ENCODE measurements at regions of chr3 and their contacts with region 1.

Region 1: GRCh38 chr3:9302425-9303181 is 53.2 kb upstream of the SRGAP3 start:
- DNase-seq: peak; percentile 79 to 93
- H3K4me3 ChIP-seq: peak overlapping the region in 3 of 4 experiments; percentile 23 to 59 (median 38); a peak in 6 of 8 replicates
- H3K27ac ChIP-seq: no peak overlapping the region
- H3K4me1 ChIP-seq: peaks cover 0 to 5% (median 3%) of the 10 kb centered on the region in 4 experiments; a peak in 5 of 7 replicates
- H3K27me3 ChIP-seq: peaks cover 0 to 2% (median under 1%) of the 10 kb centered on the region in 4 experiments; a peak in 1 of 7 replicates
- CTCF ChIP-seq: peak; percentile 70 to 98 (median 80)
- EP300 ChIP-seq: peak in 1 of 2 experiments; percentile 51; a peak in 1 of 3 replicates
- POLR2A ChIP-seq: no peak
- RAD21 ChIP-seq: peak; percentile 97 to 99

Region 2: DNA sequence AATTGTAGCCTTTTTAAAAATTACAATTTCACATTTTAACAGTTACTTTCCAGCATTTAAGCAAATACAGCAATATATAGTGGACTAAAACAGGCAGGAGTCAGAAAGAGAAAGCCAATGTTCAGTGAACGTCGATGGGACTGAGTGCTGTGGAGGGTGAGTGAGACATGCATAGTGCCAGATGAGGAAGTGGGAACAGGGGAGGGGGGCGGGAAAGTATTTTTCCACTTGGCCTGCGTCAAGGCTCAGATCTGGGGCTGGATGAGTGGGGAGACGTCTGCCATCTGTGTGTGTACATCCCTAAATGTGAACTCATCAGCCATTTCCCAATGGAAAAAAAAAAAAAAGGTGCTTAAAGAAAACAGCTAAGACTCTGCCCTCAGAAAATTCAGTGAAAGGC is 320.1 kb before region 1 on chr3:
- CTCF ChIA-PET with region 1: interaction called, 200 read pairs
- POLR2A ChIA-PET with region 1: interaction called, 4 read pairs
- DNase-seq: no peak
- H3K4me3 ChIP-seq: no peak overlapping the region
- H3K27ac ChIP-seq: no peak overlapping the region
- H3K4me1 ChIP-seq: no peaks in the 10 kb centered on the region; a peak in 1 of 7 replicates
- H3K27me3 ChIP-seq: no peaks in the 10 kb centered on the region
- CTCF ChIP-seq: no peak
- EP300 ChIP-seq: no peak
- POLR2A ChIP-seq: no peak
- RAD21 ChIP-seq: no peak

Region 3: GRCh38 chr3:9098569-9099367 is 203.8 kb before region 1 on chr3:
- CTCF ChIA-PET with region 1: interaction called, 19 read pairs
- POLR2A ChIA-PET with region 1: interaction called, 3 read pairs
- DNase-seq: no peak
- H3K4me3 ChIP-seq: no peak overlapping the region
- H3K27ac ChIP-seq: no peak overlapping the region
- H3K4me1 ChIP-seq: peaks cover 4 to 22% (median 18%) of the 10 kb centered on the region in 4 experiments; a peak in 5 of 7 replicates
- H3K27me3 ChIP-seq: no peaks in the 10 kb centered on the region
- CTCF ChIP-seq: no peak
- EP300 ChIP-seq: no peak
- POLR2A ChIP-seq: no peak
- RAD21 ChIP-seq: no peak

Region 4: DNA sequence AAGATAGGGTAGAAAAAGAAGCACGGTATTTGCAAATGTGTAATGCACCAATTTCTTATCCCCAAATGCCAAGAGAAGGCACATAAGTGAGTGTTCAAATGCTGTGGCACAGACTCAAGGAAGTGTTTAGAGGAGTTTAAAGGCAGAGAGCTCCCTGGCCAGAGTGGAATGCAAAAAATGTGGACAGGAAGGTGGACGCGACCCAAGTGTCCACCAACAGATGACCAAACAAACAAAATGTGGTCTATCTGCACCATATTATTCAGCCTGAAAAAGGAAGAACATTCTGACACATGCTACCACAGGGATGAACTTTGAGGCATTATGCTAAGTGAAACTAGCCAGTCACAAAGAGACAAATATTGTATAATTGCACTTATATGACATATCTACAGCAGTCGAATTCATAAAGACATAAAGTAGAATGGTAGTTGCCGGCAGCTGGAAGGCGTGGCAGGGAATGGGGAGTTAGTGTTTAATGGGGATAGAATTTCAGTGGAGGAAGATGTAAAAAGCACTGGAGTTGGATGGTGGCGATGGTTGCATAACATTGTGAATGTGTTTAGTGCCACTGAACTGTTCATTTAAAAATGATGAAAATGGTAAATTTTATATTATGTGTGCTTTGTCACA is 179.8 kb before region 1 on chr3:
- CTCF ChIA-PET with region 1: interaction called, 19 read pairs
- POLR2A ChIA-PET with region 1: no interaction called
- DNase-seq: no peak
- H3K4me3 ChIP-seq: no peak overlapping the region
- H3K27ac ChIP-seq: no peak overlapping the region
- H3K4me1 ChIP-seq: peaks cover 5 to 14% (median 8%) of the 10 kb centered on the region in 4 experiments; a peak in 5 of 7 replicates
- H3K27me3 ChIP-seq: no peaks in the 10 kb centered on the region
- CTCF ChIP-seq: no peak
- EP300 ChIP-seq: no peak
- POLR2A ChIP-seq: no peak
- RAD21 ChIP-seq: no peak

Region 5: DNA sequence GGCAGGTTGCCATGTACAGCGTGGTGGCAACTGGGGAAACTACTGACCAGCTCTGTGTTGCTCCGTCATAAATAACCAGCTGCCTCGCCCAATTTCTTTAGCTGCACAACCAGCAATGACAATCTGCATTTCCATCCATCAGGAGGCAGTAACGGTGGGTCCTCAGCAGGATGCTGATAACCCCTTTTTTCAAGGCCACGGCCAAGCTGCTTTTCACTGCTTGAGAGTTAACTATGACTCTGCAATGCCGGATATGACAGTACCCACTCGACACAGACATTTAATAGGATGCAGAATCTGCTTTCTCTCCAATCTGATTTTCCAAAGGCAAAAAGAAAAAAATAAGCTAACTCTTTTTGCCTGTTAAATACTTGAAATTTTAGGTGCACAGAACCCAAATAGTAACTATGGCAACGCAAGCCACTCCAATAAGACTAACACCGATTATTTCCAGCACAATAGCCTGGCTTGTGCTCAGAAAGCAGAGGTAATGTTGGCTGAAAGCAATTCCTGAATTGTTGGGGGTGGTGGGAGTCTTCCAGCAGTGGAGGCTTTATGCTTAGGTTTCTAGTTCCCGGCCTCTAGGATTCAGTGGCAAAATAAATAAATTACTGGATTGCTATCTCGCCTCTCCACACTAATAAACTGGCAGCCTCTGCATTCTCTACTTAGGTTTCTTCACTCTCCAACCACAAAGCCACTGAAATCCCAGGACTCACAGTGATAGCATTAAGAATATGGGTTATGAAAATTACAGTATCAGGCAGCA is 22.0 kb before region 1 on chr3:
- CTCF ChIA-PET with region 1: interaction called, 13 read pairs
- POLR2A ChIA-PET with region 1: interaction called, 5 read pairs
- DNase-seq: no peak
- H3K4me3 ChIP-seq: no peak overlapping the region
- H3K27ac ChIP-seq: no peak overlapping the region
- H3K4me1 ChIP-seq: peaks cover 5 to 8% (median 6%) of the 10 kb centered on the region in 4 experiments
- H3K27me3 ChIP-seq: no peaks in the 10 kb centered on the region
- CTCF ChIP-seq: peak in 1 of 3 experiments; percentile 12; a peak in 1 of 4 replicates
- EP300 ChIP-seq: no peak
- POLR2A ChIP-seq: no peak
- RAD21 ChIP-seq: peak in 1 of 2 experiments; percentile 16; a peak in 1 of 4 replicates

Region 6: GRCh38 chr3:9322780-9323179 is 20.2 kb after region 1 on chr3:
- CTCF ChIA-PET with region 1: interaction called, 15 read pairs
- POLR2A ChIA-PET with region 1: no interaction called
- DNase-seq: no peak
- H3K4me3 ChIP-seq: no peak overlapping the region
- H3K27ac ChIP-seq: no peak overlapping the region
- H3K4me1 ChIP-seq: peaks cover 0 to 5% (median 0%) of the 10 kb centered on the region in 4 experiments; a peak in 3 of 7 replicates
- H3K27me3 ChIP-seq: no peaks in the 10 kb centered on the region
- CTCF ChIP-seq: no peak
- EP300 ChIP-seq: no peak
- POLR2A ChIP-seq: no peak
- RAD21 ChIP-seq: no peak

Region 7: GRCh38 chr3:9384141-9384853 is 81.7 kb after region 1 on chr3:
- CTCF ChIA-PET with region 1: no interaction called
- POLR2A ChIA-PET with region 1: no interaction called
- DNase-seq: no peak
- H3K4me3 ChIP-seq: no peak overlapping the region
- H3K27ac ChIP-seq: no peak overlapping the region
- H3K4me1 ChIP-seq: no peaks in the 10 kb centered on the region
- H3K27me3 ChIP-seq: no peaks in the 10 kb centered on the region
- CTCF ChIP-seq: no peak
- EP300 ChIP-seq: no peak
- POLR2A ChIP-seq: peak in 1 of 2 experiments; percentile 24; a peak in 1 of 3 replicates
- RAD21 ChIP-seq: no peak

Region 8: DNA sequence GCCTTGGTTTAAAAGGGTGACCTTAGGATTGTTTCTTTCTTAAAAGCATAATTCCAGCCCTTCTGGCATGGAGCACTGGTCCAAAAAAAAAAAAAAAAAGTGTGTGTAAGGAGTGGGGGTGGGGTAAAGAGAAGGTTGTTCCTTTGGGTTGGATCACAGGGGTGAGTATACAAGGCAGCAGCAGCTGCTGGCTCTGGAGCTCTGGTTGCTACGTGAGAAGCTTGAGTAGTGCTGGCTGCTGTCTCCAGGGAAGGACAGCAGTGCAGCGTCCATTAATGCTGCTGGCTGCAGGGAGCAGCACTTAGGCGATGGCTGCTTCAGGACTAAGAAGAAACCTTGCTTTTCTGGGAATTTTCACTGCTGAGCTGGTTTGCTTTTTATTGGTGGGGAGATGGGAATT is 97.1 kb after region 1 on chr3:
- CTCF ChIA-PET with region 1: no interaction called
- POLR2A ChIA-PET with region 1: no interaction called
- DNase-seq: peak in 1 of 2 experiments; percentile 49
- H3K4me3 ChIP-seq: peak overlapping the region; percentile 95 to 99 (median 98)
- H3K27ac ChIP-seq: peak overlapping the region; percentile 67; the same call in 1 of the 2 replicates
- H3K4me1 ChIP-seq: peaks cover 8 to 33% (median 16%) of the 10 kb centered on the region in 4 experiments; a peak in 6 of 7 replicates
- H3K27me3 ChIP-seq: no peaks in the 10 kb centered on the region
- CTCF ChIP-seq: 0 out of 4 replicates have a peak, but pooled peaks of 1 of the 3 experiments have one; percentile 5
- EP300 ChIP-seq: no peak
- POLR2A ChIP-seq: peak; percentile 67 to 74
- RAD21 ChIP-seq: peak; percentile 13 to 28; a peak in 2 of 4 replicates

Measured in H1 (cell line).